ENCODE measurements at regions of chr14 and their contacts with region 1.

Region 1: GRCh38 chr14:32457213-32457920 is 128.3 kb downstream of the AKAP6 start:
- DNase-seq: no peak

Region 2: DNA sequence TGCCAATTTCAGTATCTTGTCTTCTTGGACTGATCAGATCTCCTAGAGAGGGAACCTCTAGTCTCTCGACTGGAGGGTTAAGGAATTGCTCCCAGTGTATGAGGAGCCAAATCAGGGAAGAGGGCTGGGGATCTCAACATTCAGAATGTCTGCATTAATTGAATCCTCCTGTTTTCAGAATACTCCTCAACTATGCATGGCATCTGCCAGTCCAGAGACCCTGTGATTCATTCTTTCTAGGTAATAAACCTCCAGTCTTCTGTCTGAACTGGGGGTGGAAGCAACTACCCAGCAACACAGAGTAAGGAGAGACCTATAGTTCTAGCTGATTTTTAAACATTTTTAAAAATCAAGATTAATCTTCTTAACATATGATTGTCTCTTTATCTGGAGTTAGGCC is 35.6 kb before region 1 on chr14:
- intact Hi-C with region 1: loop called (anchors 5 kb)
- DNase-seq: no peak

Region 3: GRCh38 chr14:32481707-32482106 is 24.3 kb after region 1 on chr14:
- intact Hi-C with region 1: no loop called
- DNase-seq: no peak